OCI-LY7 (cell line): ENCODE measurements at regions of chr10 and their contacts with region 1.

Region 1: GRCh38 chr10:62779487-62780248 is 24.9 kb upstream of the ADO start:
- DNase-seq: peak; percentile 86
- H3K4me3 ChIP-seq: peak overlapping the region; percentile 5
- H3K27ac ChIP-seq: peak overlapping the region; percentile 38
- H3K4me1 ChIP-seq: peaks cover 30% of the 10 kb centered on the region
- CTCF ChIP-seq: no peak

Region 2: GRCh38 chr10:62577666-62578291 is 201.9 kb before region 1 on chr10:
- CTCF ChIA-PET with region 1: no interaction called
- POLR2A ChIA-PET with region 1: no interaction called
- intact Hi-C with region 1: no loop called
- DNase-seq: no peak
- H3K4me3 ChIP-seq: no peak overlapping the region
- H3K27ac ChIP-seq: no peak overlapping the region
- H3K4me1 ChIP-seq: no peaks in the 10 kb centered on the region
- CTCF ChIP-seq: no peak

Region 3: GRCh38 chr10:62696798-62697197 is 82.9 kb before region 1 on chr10:
- CTCF ChIA-PET with region 1: no interaction called
- POLR2A ChIA-PET with region 1: no interaction called
- intact Hi-C with region 1: no loop called
- DNase-seq: no peak
- H3K4me3 ChIP-seq: no peak overlapping the region
- H3K27ac ChIP-seq: no peak overlapping the region
- H3K4me1 ChIP-seq: peaks cover under 1% of the 10 kb centered on the region
- CTCF ChIP-seq: no peak

Region 4: DNA sequence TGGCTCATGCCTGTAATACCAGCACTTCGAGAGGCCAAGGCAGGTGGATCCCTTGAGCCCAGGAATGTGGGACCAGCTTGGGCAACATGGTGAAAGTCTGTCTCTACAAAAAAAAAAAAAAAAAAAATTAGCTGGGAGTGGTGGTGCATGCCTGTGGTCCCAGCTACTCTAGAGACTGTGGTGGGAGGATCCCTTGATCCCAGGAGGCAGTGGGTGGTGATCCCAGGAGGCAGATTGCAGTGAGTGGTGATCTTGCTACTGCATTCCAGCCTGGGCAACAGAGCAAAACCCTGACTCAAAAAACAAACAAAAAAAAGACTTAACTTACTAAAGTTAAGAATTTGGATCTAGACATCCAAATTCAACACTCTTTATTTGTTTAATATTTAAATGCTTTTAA is 14.6 kb after region 1 on chr10:
- CTCF ChIA-PET with region 1: no interaction called
- POLR2A ChIA-PET with region 1: interaction called, 19 read pairs
- intact Hi-C with region 1: no loop called
- DNase-seq: no peak
- H3K4me3 ChIP-seq: no peak overlapping the region
- H3K27ac ChIP-seq: no peak overlapping the region
- H3K4me1 ChIP-seq: no peaks in the 10 kb centered on the region
- CTCF ChIP-seq: no peak

Region 5: DNA sequence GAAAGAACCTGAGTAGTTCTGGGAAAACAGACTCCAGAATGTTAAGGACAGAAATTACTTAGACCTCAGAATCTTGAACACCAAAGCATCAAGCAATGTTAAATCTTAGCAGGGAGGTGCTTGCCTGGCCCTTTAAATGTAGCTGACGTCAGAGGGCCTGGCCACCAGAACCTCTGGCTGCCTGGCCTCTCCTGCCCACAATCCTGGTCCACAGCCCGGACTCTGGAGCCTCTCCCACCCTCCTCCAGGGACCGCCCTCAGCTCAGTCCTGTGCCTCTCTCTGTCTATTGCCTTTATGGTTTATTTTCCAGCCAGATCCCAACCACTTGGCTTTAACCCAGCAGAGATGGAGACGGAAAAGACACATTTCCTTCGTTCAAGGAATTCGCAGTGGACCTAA is 78.7 kb after region 1 on chr10:
- CTCF ChIA-PET with region 1: no interaction called
- POLR2A ChIA-PET with region 1: no interaction called
- intact Hi-C with region 1: no loop called
- DNase-seq: no peak
- H3K4me3 ChIP-seq: no peak overlapping the region
- H3K27ac ChIP-seq: no peak overlapping the region
- H3K4me1 ChIP-seq: peaks cover 12% of the 10 kb centered on the region
- CTCF ChIP-seq: no peak

Region 6: DNA sequence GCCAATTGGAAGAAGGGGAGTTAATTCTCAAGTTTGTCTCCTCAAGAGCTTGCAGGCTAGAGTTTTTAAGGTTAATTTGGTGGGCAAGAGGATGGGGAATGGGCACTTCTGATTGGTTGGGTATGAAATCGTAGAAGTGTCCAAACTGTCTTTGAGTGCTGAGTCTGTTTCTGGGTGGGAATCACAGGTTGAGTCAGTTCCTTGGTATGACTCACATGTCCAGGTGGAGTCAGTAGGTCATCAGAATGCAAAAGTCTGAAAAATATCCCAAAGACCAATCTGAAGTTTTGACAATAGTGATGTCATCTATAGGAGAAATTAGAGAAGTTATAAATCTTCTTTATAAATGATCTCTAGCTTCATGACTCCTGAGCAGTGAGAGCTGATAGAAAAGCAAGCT is 1993.7 kb after region 1 on chr10:
- CTCF ChIA-PET with region 1: no interaction called
- POLR2A ChIA-PET with region 1: no interaction called
- intact Hi-C with region 1: no loop called
- DNase-seq: no peak
- H3K4me3 ChIP-seq: no peak overlapping the region
- H3K27ac ChIP-seq: no peak overlapping the region
- H3K4me1 ChIP-seq: no peaks in the 10 kb centered on the region
- CTCF ChIP-seq: no peak